ENCODE measurements at regions of chr4 and their contacts with region 1.

Region 1: GRCh38 chr4:161342881-161343568 is 820.8 kb downstream of the FSTL5 start:
- DNase-seq: no peak
- ATAC-seq: no peak
- H3K4me3 ChIP-seq: no peak overlapping the region
- H3K4me3 Mint-ChIP-seq: no peak overlapping the region
- H3K27ac ChIP-seq: no peak overlapping the region
- H3K27ac Mint-ChIP-seq: no peak overlapping the region
- H3K4me1 ChIP-seq: no peaks in the 10 kb centered on the region
- H3K4me1 Mint-ChIP-seq: no peaks in the 10 kb centered on the region
- H3K27me3 ChIP-seq: no peaks in the 10 kb centered on the region
- H3K27me3 Mint-ChIP-seq: no peaks in the 10 kb centered on the region
- CTCF ChIP-seq: no peak

Region 2: GRCh38 chr4:159677521-159677920 is 1665.5 kb before region 1 on chr4:
- CTCF ChIA-PET with region 1: no interaction called
- POLR2A ChIA-PET with region 1: no interaction called
- intact Hi-C with region 1: no loop called
- DNase-seq: no peak
- ATAC-seq: no peak
- H3K4me3 ChIP-seq: no peak overlapping the region
- H3K4me3 Mint-ChIP-seq: no peak overlapping the region
- H3K27ac ChIP-seq: no peak overlapping the region
- H3K27ac Mint-ChIP-seq: no peak overlapping the region
- H3K4me1 ChIP-seq: no peaks in the 10 kb centered on the region
- H3K4me1 Mint-ChIP-seq: no peaks in the 10 kb centered on the region
- H3K27me3 ChIP-seq: no peaks in the 10 kb centered on the region
- H3K27me3 Mint-ChIP-seq: no peaks in the 10 kb centered on the region
- CTCF ChIP-seq: no peak

Region 3: DNA sequence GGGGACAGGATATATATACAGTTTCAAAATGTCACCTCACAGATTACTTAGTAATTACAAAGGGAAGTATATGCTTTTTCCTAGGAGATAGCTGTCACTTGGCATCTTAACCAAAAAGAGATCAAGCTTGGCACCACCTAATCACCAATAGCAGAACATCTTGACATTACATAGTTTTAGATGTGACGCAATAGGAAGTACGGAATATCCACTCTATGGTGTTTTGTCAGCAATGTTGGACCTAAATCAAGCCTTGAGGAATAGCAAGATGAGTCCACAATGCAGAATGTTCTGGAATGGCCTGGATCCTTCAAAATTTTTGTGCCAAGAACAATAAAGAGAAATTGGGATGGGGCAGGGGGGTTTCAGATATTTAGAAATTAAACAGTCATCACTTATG is 667.5 kb before region 1 on chr4:
- CTCF ChIA-PET with region 1: no interaction called
- POLR2A ChIA-PET with region 1: no interaction called
- intact Hi-C with region 1: no loop called
- DNase-seq: no peak
- ATAC-seq: no peak
- H3K4me3 ChIP-seq: no peak overlapping the region
- H3K4me3 Mint-ChIP-seq: no peak overlapping the region
- H3K27ac ChIP-seq: no peak overlapping the region
- H3K27ac Mint-ChIP-seq: no peak overlapping the region
- H3K4me1 ChIP-seq: no peaks in the 10 kb centered on the region
- H3K4me1 Mint-ChIP-seq: no peaks in the 10 kb centered on the region
- H3K27me3 ChIP-seq: no peaks in the 10 kb centered on the region
- H3K27me3 Mint-ChIP-seq: no peaks in the 10 kb centered on the region
- CTCF ChIP-seq: no peak

Region 4: GRCh38 chr4:161287678-161288352 is 55.2 kb before region 1 on chr4:
- CTCF ChIA-PET with region 1: no interaction called
- POLR2A ChIA-PET with region 1: no interaction called
- intact Hi-C with region 1: no loop called
- DNase-seq: no peak
- ATAC-seq: no peak
- H3K4me3 ChIP-seq: no peak overlapping the region
- H3K4me3 Mint-ChIP-seq: no peak overlapping the region
- H3K27ac ChIP-seq: no peak overlapping the region
- H3K27ac Mint-ChIP-seq: no peak overlapping the region
- H3K4me1 ChIP-seq: no peaks in the 10 kb centered on the region
- H3K4me1 Mint-ChIP-seq: no peaks in the 10 kb centered on the region
- H3K27me3 ChIP-seq: no peaks in the 10 kb centered on the region
- H3K27me3 Mint-ChIP-seq: no peaks in the 10 kb centered on the region
- CTCF ChIP-seq: no peak

Region 5: GRCh38 chr4:161321706-161322105 is 21.3 kb before region 1 on chr4:
- CTCF ChIA-PET with region 1: no interaction called
- POLR2A ChIA-PET with region 1: no interaction called
- intact Hi-C with region 1: loop called in 1 of 2 experiments (anchors 1 kb)
- DNase-seq: no peak
- ATAC-seq: no peak
- H3K4me3 ChIP-seq: no peak overlapping the region
- H3K4me3 Mint-ChIP-seq: no peak overlapping the region
- H3K27ac ChIP-seq: no peak overlapping the region
- H3K27ac Mint-ChIP-seq: no peak overlapping the region
- H3K4me1 ChIP-seq: no peaks in the 10 kb centered on the region
- H3K4me1 Mint-ChIP-seq: no peaks in the 10 kb centered on the region
- H3K27me3 ChIP-seq: no peaks in the 10 kb centered on the region
- H3K27me3 Mint-ChIP-seq: no peaks in the 10 kb centered on the region
- CTCF ChIP-seq: no peak

Region 6: GRCh38 chr4:161359491-161359890 is 16.5 kb after region 1 on chr4:
- CTCF ChIA-PET with region 1: no interaction called
- POLR2A ChIA-PET with region 1: no interaction called
- intact Hi-C with region 1: no loop called
- DNase-seq: no peak
- ATAC-seq: no peak
- H3K4me3 ChIP-seq: no peak overlapping the region
- H3K4me3 Mint-ChIP-seq: no peak overlapping the region
- H3K27ac ChIP-seq: no peak overlapping the region
- H3K27ac Mint-ChIP-seq: no peak overlapping the region
- H3K4me1 ChIP-seq: no peaks in the 10 kb centered on the region
- H3K4me1 Mint-ChIP-seq: no peaks in the 10 kb centered on the region
- H3K27me3 ChIP-seq: no peaks in the 10 kb centered on the region
- H3K27me3 Mint-ChIP-seq: no peaks in the 10 kb centered on the region
- CTCF ChIP-seq: no peak

Measured in CD8-positive, alpha-beta T cell (primary cell).